ENCODE measurements at regions of chr6 and their contacts with region 1.

Region 1: GRCh38 chr6:63764318-63764916 is 128.8 kb downstream of the PHF3 start:
- DNase-seq: no peak
- H3K4me3 ChIP-seq: no peak overlapping the region
- H3K27ac ChIP-seq: no peak overlapping the region
- H3K4me1 ChIP-seq: no peaks in the 10 kb centered on the region
- H3K27me3 ChIP-seq: no peaks in the 10 kb centered on the region
- CTCF ChIP-seq: peak; percentile 74

Region 2: DNA sequence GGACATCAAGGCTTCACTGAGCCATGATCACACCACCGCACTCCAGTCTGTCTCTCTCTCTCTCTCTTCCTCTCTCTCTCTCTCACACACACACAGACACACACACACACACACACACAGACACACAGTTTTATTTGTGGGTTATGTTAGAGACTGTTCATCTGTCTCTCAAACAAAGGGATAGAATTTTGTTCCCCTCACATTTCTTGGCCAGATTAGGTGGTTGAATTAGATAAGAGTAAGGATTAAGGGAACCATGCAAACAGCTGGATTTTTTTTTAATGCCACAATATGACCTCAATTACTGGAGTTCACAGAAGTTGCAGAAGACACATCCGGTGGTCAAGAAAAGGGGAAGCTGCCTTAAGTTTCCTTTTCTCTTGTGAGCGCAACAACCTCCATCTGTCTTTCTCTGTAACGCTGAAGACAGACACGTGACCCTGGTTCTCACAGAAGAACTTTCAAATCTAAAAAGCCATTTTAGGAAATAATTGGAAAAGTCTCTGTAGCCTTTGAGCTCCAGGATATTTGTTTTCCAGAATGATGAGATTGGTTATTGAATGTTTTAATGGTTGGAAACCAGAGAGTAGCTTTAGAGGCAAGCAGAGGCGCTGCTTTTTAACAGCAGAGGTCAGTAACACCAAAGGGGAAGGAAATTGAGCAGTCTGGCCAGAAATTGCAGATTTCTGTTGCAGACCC is 411.7 kb before region 1 on chr6:
- intact Hi-C with region 1: loop called (anchors 5 kb)
- DNase-seq: no peak
- H3K4me3 ChIP-seq: no peak overlapping the region
- H3K27ac ChIP-seq: peak overlapping the region; percentile 40
- H3K4me1 ChIP-seq: peaks cover 6% of the 10 kb centered on the region
- H3K27me3 ChIP-seq: no peaks in the 10 kb centered on the region
- CTCF ChIP-seq: peak; percentile 69

Region 3: DNA sequence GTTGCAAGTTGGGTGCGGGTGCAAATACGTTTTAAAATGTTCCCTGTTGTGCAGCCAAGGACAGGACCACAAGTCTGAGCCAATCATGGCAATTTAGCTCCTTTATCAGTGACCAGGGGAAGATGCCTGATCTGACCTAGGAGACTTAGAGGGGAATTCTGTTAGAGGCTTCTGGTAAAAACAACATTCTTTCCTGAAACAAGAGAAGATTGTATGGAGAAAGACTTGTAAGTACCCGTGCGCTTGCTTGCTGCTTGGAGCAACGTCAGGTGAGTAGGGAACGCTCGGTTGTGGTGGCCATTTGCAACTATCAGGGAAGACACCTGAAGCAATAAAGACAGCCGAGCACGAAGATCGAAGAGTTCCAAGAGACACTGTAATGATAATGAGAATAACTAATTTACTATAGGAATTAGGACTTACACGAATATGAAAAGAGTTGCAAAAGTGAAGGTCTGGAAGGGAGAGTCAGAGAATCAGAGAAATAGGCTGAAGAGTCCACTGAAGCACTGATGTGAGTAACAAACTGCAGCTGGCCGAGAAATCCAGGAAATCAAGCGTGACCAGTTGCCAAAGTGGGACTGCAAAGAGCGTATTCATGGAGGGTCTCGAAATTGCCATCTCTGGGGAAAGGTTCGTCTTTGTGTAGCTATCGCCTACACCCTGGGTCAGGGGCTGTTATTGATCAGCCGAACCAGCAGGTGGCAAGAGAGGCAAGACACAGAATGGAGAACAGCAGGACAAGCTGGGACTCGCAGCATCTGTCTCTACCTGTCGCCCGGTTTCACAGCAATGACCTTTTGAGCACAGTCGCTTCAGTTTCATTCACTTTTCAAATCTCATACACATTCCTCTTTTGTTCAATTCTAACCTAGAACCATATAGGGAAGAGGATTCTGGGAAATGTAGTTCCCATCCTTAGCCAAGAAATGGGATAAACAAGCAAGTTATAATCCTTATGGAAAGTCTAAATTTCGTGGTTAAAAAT is 166.1 kb before region 1 on chr6:
- intact Hi-C with region 1: loop called (anchors 5 kb)
- DNase-seq: peak; percentile 41
- H3K4me3 ChIP-seq: peak overlapping the region; percentile 62
- H3K27ac ChIP-seq: no peak overlapping the region
- H3K4me1 ChIP-seq: peaks cover 8% of the 10 kb centered on the region
- H3K27me3 ChIP-seq: no peaks in the 10 kb centered on the region
- CTCF ChIP-seq: peak; percentile 89